ENCODE measurements at regions of chr7 and their contacts with region 1.

Region 1: DNA sequence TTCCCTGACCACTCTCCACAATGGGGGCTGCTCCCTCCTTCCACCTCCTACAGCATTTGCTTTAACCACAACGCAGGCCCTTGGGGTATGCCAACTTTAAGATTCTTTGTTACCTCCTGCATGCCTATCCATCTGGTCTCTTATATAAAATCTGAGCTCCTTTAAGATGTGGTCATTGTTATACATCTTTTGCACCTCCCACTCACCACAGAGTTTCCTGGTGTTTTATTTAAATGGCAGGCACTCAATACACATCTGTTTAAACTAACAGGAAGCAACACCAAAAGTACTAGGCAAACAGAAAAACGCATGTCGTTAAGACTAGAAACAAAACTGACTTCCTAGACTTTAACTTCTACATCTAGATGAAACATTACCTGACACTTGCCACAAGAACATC is 36.3 kb downstream of the SLC25A13 start:
- DNase-seq: peak; percentile 87
- H3K4me3 Mint-ChIP-seq: peak overlapping the region; percentile 68
- H3K27ac Mint-ChIP-seq: peak overlapping the region; percentile 93
- H3K4me1 Mint-ChIP-seq: peaks cover 49% of the 10 kb centered on the region
- H3K27me3 Mint-ChIP-seq: no peaks in the 10 kb centered on the region

Region 2: GRCh38 chr7:96303686-96304443 is 18.3 kb after region 1 on chr7:
- intact Hi-C with region 1: loop called (anchors 1 kb)
- DNase-seq: no peak
- H3K4me3 Mint-ChIP-seq: peak overlapping the region; percentile 58
- H3K27ac Mint-ChIP-seq: peak overlapping the region; percentile 89
- H3K4me1 Mint-ChIP-seq: peaks cover 43% of the 10 kb centered on the region
- H3K27me3 Mint-ChIP-seq: no peaks in the 10 kb centered on the region

Region 3: DNA sequence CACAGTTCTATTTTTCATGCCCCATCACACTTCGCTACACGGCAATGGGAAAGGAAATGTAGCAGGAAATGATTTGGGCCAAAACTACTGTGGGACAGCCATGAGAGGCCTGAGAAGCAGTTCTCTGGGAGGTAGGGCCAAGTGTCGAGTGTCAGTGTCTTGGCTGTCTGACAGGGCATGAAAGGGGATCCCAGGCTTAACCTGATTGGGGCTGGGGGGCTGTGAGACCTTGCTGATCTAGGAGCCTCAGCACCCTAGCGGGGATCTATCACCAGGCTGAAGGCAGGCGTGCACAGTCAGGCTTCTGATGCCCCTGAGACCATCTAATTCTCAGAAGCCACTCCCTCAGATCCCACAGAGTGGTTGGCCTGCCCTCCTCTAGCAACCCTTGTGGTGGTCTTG is 94.5 kb after region 1 on chr7:
- intact Hi-C with region 1: no loop called
- DNase-seq: no peak
- H3K4me3 Mint-ChIP-seq: no peak overlapping the region
- H3K27ac Mint-ChIP-seq: no peak overlapping the region
- H3K4me1 Mint-ChIP-seq: no peaks in the 10 kb centered on the region
- H3K27me3 Mint-ChIP-seq: peaks cover 9% of the 10 kb centered on the region

Region 4: DNA sequence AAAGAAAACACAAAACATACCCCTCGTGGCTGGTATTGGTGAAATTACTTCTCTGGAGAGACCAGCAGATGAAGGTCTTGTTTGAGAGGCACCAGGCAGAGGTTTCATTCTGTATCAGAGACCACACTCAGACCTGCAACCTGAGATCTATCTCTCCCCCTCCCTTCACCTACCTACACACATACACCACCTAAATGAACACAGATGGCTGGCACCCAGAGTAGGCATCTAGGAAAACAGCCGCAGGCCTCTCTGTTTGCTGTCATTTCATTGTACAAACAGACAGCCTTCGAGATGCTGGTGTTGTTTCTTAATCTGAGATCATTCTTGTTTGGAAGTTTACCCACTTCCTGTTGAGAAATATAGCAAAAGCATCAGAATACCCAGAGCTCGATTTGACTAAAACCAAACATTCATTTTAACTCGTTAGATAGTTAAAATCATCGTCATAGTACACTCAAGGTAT is 210.2 kb after region 1 on chr7:
- intact Hi-C with region 1: loop called (anchors 1 kb)
- DNase-seq: peak; percentile 74
- H3K4me3 Mint-ChIP-seq: peak overlapping the region; percentile 57
- H3K27ac Mint-ChIP-seq: peak overlapping the region; percentile 89
- H3K4me1 Mint-ChIP-seq: peaks cover 18% of the 10 kb centered on the region
- H3K27me3 Mint-ChIP-seq: peaks cover 9% of the 10 kb centered on the region